ENCODE measurements at regions of chr11 and their contacts with region 1.

Region 1: DNA sequence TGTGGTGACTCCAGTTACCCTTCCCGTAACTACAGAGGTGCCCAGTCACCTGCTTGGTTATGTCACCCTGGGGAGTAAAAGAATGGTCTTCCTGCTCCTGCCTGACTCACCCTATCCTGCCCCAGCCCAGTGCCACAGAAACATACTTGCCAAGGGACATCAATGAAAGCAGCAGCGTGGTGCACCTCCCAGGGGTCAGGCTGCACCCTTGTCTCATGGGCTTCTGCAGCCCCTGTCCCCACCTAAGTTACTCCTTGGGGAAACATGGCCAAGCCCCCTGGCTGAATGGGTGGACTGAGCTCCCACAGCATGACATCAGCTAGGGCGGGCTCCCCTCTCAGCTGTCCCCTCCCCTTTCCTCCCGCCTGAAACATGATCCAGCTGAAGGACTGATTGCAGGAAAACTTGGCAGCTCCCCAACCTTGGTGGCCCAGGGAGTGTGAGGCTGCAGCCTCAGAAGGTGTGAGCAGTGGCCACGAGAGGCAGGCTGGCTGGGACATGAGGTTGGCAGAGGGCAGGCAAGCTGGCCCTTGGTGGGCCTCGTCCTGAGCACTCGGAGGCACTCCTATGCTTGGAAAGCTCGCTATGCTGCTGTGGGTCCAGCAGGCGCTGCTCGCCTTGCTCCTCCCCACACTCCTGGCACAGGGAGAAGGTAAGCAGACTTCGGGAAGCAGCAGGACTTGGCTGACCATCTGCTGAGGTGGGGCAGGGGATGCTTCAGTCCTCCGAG is at the start of gene HTR3A:
- DNase-seq: peak; percentile 75
- H3K4me3 Mint-ChIP-seq: no peak within 1 kb of the TSS
- H3K27ac Mint-ChIP-seq: no peak within 1 kb of the TSS
- H3K4me1 Mint-ChIP-seq: peaks cover 10% of the 10 kb centered on the region
- H3K27me3 Mint-ChIP-seq: peaks cover 80% of the 10 kb centered on the region
- CTCF ChIP-seq: no peak
- total RNA-seq, gene HTR3A: not detected in 2 replicates

Region 2: GRCh38 chr11:113952588-113952987 is 22.3 kb before region 1 on chr11:
- CTCF ChIA-PET with region 1: no interaction called
- POLR2A ChIA-PET with region 1: no interaction called
- intact Hi-C with region 1: no loop called
- DNase-seq: no peak
- H3K4me3 Mint-ChIP-seq: no peak overlapping the region
- H3K27ac Mint-ChIP-seq: no peak overlapping the region
- H3K4me1 Mint-ChIP-seq: no peaks in the 10 kb centered on the region
- H3K27me3 Mint-ChIP-seq: peaks cover 82% of the 10 kb centered on the region
- CTCF ChIP-seq: no peak

Region 3: DNA sequence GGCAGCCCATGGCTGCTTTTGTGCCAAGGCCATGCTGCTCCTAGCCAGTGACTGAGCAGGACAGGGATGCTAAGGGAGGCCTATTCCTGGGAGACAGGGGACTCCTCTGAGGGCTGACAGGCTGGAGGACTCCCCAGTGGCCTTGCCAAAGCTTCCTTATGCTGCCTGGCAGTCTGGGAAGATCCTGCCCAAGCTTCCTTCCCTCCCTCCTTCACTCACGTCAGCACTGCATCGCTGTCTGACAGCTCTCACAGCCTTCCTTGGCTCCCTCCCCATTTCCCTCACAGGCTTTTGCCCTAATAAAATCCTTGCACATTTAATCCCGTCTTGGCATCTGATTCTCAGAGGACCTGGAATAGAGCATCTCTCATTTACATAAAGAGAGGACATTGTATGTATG is 26.5 kb after region 1 on chr11:
- CTCF ChIA-PET with region 1: no interaction called
- POLR2A ChIA-PET with region 1: no interaction called
- intact Hi-C with region 1: loop called (anchors 1 kb)
- DNase-seq: no peak
- H3K4me3 Mint-ChIP-seq: no peak overlapping the region
- H3K27ac Mint-ChIP-seq: no peak overlapping the region
- H3K4me1 Mint-ChIP-seq: no peaks in the 10 kb centered on the region
- H3K27me3 Mint-ChIP-seq: peaks cover 79% of the 10 kb centered on the region
- CTCF ChIP-seq: no peak

Measured in MCF 10A (cell line).